GM12878 (cell line): ENCODE measurements at regions of chr13 and their contacts with region 1.

Region 1: DNA sequence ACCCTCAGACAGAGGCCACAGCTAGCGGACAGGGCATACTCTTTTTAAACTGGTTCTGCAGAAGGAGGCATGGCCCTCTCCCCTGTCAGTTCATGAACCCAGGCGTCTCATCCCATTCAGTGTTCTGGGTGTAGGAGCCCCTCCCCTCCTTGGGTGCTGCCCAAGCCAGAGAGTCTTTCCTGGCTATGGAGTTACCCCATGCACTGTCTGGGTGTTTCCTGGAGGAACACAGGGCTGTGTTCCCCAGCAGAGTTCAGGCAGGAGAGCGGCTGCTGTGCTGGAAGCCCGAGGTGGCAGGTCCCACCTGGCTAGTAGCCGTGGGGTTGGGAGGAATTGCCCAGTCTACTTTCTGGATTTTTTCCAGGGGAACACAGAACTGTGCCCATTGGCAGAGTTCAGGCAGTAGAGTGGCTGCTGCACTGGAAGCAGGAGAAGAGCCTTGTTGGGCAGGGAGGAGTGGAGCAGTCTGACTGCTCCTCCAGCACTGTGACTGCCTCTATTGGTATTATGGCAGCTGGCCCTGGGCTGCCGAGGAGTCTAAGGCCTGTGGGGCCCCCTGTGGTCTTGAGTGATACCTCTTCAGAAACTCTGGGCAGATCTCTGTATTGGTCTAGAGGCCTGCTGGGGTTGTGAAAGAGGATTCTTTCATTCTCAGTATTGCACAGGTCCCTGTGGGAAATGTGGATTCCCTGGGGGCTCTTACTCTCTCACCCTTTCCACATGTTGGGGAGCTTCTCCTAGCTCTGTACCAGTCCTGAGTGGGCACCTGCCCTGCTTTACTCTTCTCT is 168.3 kb downstream of the PCDH20 start:
- DNase-seq: peak; percentile 48
- ATAC-seq: peak; percentile 99
- H3K4me3 ChIP-seq: no peak overlapping the region
- H3K27ac ChIP-seq: peak overlapping the region; percentile 39
- H3K4me1 ChIP-seq: peaks cover 4% of the 10 kb centered on the region
- H3K27me3 ChIP-seq: no peaks in the 10 kb centered on the region
- CTCF ChIP-seq: peak in 2 of 3 experiments; percentile 44 to 45; a peak in 3 of 6 replicates
- EP300 ChIP-seq: 0 out of 4 replicates have a peak, but pooled peaks have one; percentile 12 to 40
- POLR2A ChIP-seq: no peak
- RAD21 ChIP-seq: peak; percentile 58

Region 2: DNA sequence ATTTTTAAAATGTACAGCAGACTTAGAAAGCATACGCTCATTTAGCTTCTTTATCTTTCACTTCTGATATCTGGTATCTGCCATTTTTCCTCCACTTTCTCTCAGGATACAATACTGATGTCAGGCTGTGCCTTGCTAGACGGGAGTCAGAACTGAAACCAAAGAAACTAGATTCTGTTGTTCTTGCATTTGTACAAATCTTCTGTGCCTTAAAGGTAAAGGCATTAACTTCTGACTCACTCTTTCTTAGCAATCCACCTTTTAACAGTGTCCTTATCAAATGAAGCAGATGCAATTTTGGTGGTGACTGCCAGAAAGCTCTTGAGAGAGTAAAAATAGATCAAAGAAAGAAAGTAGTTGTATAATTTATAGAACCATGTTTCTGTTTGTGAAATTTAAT is 202.1 kb before region 1 on chr13:
- CTCF ChIA-PET with region 1: no interaction called
- POLR2A ChIA-PET with region 1: no interaction called
- RAD21 ChIA-PET with region 1: interaction called, 3 read pairs
- SMC1A ChIA-PET with region 1: interaction called, 8 read pairs
- in situ Hi-C with region 1: no loop called
- intact Hi-C with region 1: loop called (anchors 5 kb)
- DNase-seq: no peak
- ATAC-seq: peak; percentile 81
- H3K4me3 ChIP-seq: no peak overlapping the region
- H3K27ac ChIP-seq: no peak overlapping the region
- H3K4me1 ChIP-seq: no peaks in the 10 kb centered on the region
- H3K27me3 ChIP-seq: peaks cover 0 to 2% of the 10 kb centered on the region in 2 experiments; a peak in 1 of 4 replicates
- CTCF ChIP-seq: no peak
- EP300 ChIP-seq: no peak
- POLR2A ChIP-seq: no peak
- RAD21 ChIP-seq: no peak

Region 3: DNA sequence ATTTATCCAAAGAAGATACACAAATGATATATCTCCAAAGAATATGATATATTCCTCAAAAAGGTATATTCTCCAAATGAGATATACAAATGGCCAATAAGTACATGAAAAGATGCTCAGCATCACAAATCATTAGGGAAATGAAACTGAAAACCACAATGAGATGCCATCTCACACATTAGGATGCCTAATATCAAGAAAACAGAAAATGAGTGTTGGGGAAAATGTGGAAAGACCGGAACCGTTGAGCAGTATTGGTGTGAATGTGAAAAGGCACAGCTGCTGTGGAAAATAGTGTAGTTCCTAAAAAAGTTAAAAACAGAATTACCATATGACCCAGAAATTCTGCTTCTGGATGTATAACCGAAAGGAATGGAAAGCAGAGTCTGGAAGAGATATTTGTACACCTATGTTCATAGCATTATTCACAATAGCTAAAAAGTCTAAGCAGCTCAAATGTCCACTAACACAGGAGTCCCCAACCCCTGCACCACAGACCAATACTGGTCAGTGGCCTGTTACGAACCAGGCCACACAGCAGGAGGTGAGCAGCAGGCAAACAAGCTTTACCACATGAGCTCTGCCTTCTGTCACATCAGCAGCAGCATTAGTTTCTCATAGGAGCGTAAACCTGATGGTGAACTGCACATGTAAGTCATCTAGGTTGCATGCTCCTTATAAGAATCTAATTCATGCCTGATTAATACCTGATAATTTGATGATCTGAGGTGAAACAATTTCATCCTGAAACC is 123.6 kb before region 1 on chr13:
- CTCF ChIA-PET with region 1: no interaction called
- POLR2A ChIA-PET with region 1: no interaction called
- RAD21 ChIA-PET with region 1: interaction called, 5 read pairs
- SMC1A ChIA-PET with region 1: interaction called, 16 read pairs
- in situ Hi-C with region 1: no loop called
- intact Hi-C with region 1: loop called (anchors 1 kb)
- DNase-seq: no peak
- ATAC-seq: peak; percentile 92
- H3K4me3 ChIP-seq: no peak overlapping the region
- H3K27ac ChIP-seq: no peak overlapping the region
- H3K4me1 ChIP-seq: no peaks in the 10 kb centered on the region
- H3K27me3 ChIP-seq: no peaks in the 10 kb centered on the region
- CTCF ChIP-seq: no peak
- EP300 ChIP-seq: peak; percentile 46 to 75; a peak in 1 of 4 replicates
- POLR2A ChIP-seq: no peak
- RAD21 ChIP-seq: no peak

Region 4: GRCh38 chr13:61180234-61180633 is 67.1 kb before region 1 on chr13:
- CTCF ChIA-PET with region 1: interaction called, 4 read pairs
- POLR2A ChIA-PET with region 1: interaction called, 3 read pairs
- RAD21 ChIA-PET with region 1: interaction called, 3 read pairs
- SMC1A ChIA-PET with region 1: interaction called, 4 read pairs
- in situ Hi-C with region 1: no loop called
- intact Hi-C with region 1: loop called (anchors 5 kb)
- DNase-seq: no peak
- ATAC-seq: no peak
- H3K4me3 ChIP-seq: no peak overlapping the region
- H3K27ac ChIP-seq: no peak overlapping the region
- H3K4me1 ChIP-seq: no peaks in the 10 kb centered on the region
- H3K27me3 ChIP-seq: no peaks in the 10 kb centered on the region
- CTCF ChIP-seq: no peak
- EP300 ChIP-seq: no peak
- POLR2A ChIP-seq: no peak
- RAD21 ChIP-seq: no peak